Ascending aorta (tissue), 2 donors: ENCODE measurements at regions of chr6 and their contacts with region 1.

Region 1: GRCh38 chr6:134373282-134373922 is 55.5 kb upstream of the SGK1 start:
- DNase-seq: peak; percentile 68 to 88
- H3K4me3 ChIP-seq: no peak overlapping the region
- H3K27ac ChIP-seq: peak overlapping the region; percentile 58 to 71
- H3K4me1 ChIP-seq: peaks cover 7 to 15% of the 10 kb centered on the region in 2 donors
- H3K27me3 ChIP-seq: no peaks in the 10 kb centered on the region
- CTCF ChIP-seq: no peak

Region 2: DNA sequence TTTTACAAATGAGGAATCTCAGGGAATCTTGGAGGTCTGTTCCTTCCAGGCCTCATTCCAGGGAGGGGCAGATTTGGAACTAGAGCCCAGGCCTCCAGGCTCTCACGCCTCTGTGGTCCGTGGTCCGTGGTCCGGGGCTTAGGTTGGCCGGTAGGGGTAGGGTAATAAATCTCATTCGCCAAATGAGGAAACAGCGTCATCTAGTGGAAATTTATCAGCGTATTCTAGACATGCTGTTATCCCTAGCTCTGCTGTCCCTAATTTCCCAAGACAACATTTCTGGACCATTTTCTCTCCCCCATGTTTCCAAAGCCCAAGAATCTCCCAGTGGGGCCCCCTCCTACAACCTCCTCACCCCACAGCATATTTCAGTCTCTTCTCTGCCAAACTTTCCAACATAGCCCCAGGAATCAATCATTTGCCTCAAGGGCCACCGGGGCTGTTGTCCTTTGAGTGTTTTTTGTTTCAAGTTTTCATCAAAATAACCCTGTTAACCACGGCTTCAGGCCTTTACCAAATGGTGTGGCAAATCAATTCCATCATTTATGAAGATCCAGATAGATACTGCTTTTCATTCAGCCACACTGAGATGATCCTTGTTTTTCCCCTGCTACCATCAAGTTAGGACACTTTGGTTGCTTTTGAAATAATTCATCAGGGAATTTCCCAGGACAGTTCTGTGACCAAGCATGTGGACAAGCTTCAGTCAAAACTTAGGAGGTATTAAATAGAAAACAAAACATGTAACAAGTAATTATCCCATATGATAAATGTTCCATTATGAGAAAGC is 449.7 kb after region 1 on chr6:
- intact Hi-C with region 1: loop called (anchors 10 kb)
- DNase-seq: no peak
- H3K4me3 ChIP-seq: no peak overlapping the region
- H3K27ac ChIP-seq: no peak overlapping the region
- H3K4me1 ChIP-seq: peaks cover 0 to 6% of the 10 kb centered on the region in 2 donors
- H3K27me3 ChIP-seq: no peaks in the 10 kb centered on the region
- CTCF ChIP-seq: peak; percentile 80 to 82 (median 82)

Region 3: GRCh38 chr6:134908906-134909516 is 535.6 kb after region 1 on chr6:
- intact Hi-C with region 1: loop called (anchors 10 kb)
- DNase-seq: peak in 1 of 2 donors; percentile 90
- H3K4me3 ChIP-seq: peak overlapping the region; percentile 19 to 48
- H3K27ac ChIP-seq: peak overlapping the region; percentile 34 to 41
- H3K4me1 ChIP-seq: no peaks in the 10 kb centered on the region
- H3K27me3 ChIP-seq: no peaks in the 10 kb centered on the region
- CTCF ChIP-seq: no peak